Mammary epithelial cell (primary cell): ENCODE measurements at regions of chr9 and their contacts with region 1.

Region 1: DNA sequence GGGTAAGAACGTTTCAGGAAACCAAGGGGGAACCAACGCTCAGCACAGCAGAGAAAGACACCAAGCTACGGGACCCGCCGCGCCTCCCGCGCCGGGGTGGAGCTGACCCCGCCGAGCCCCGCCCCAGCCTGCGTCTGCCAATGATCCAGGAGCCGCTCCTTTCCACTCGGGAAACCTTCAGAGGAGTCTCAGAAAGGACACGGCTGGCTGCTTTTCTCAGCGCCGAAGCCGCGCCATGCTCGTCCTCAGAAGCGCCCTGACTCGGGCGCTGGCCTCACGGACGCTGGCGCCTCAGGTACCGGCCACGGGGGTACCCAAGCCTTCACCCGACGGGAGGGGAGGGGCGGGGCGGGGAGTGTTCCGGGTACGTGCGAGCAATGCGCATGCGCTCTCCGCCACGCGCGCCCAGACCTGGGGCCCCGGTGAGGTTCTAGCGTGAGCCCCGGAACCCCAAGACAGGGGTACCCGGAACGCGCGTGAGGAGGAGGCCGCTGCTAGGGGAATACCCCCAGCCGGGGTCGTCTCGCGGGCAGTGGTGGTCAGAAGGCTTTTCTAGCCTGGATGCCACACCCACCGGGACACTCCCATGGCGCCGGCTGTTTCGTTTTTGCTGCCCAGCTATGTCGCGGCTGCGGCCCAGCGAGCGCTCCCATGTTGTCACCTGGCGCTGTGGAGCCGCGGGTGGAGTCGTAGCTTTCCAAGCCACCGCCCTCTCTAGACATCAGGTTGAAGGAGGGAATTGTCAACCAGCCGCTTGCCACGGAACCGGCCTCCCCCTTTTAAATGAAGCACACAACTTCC is at the start of gene NIPSNAP3A:
- DNase-seq: peak; percentile 80
- H3K4me3 ChIP-seq: peak within 1 kb of the TSS; percentile 83 to 95 (median 95)
- H3K27ac ChIP-seq: peak within 1 kb of the TSS; percentile 89
- H3K4me1 ChIP-seq: peaks cover 14% of the 10 kb centered on the region
- H3K27me3 ChIP-seq: no peaks in the 10 kb centered on the region
- CTCF ChIP-seq: no peak
- total RNA-seq, gene NIPSNAP3A: 19.2 to 50.2 TPM

Region 2: GRCh38 chr9:103789686-103790085 is 958.1 kb before region 1 on chr9:
- CTCF ChIA-PET with region 1: no interaction called
- dilution Hi-C with region 1: no loop called
- in situ Hi-C with region 1: no loop called
- intact Hi-C with region 1: loop called (anchors 10 kb)
- DNase-seq: peak; percentile 33
- H3K4me3 ChIP-seq: no peak overlapping the region
- H3K27ac ChIP-seq: no peak overlapping the region
- H3K4me1 ChIP-seq: no peaks in the 10 kb centered on the region
- H3K27me3 ChIP-seq: no peaks in the 10 kb centered on the region
- CTCF ChIP-seq: peak; percentile 76 to 77

Region 3: DNA sequence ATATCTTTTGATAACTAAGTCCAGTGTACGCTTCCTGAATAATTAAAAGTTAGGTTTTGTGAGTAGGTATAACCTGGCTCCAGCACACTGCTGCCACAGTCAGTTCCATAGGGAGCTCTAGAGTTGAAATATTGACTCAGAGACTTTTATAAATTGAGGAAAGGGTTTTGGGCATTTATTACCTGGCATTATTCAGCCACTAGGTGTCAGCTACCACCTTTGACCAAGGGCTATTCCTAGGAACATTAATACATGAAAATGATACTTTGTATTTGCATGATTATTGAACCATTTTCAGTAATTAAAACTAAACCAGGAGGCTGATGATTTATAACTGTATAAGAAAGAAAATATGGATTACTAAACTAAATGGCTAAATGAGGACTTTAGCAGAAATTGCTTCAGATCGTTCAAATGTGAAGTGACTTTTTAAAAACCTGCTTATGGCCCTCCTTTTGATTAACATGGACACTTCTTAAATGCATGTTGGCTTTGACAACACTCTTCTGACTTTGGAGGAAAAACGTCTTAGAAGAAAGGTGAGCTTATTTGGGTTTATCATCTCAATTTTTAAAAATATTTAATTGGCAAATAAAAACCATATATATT is 570.7 kb before region 1 on chr9:
- CTCF ChIA-PET with region 1: no interaction called
- dilution Hi-C with region 1: no loop called
- in situ Hi-C with region 1: no loop called
- intact Hi-C with region 1: loop called (anchors 1 kb)
- DNase-seq: peak; percentile 32
- H3K4me3 ChIP-seq: no peak overlapping the region
- H3K27ac ChIP-seq: no peak overlapping the region
- H3K4me1 ChIP-seq: no peaks in the 10 kb centered on the region
- H3K27me3 ChIP-seq: no peaks in the 10 kb centered on the region
- CTCF ChIP-seq: peak; percentile 67 to 76

Region 4: GRCh38 chr9:104386425-104387069 is 361.2 kb before region 1 on chr9:
- CTCF ChIA-PET with region 1: no interaction called
- dilution Hi-C with region 1: no loop called
- in situ Hi-C with region 1: no loop called
- intact Hi-C with region 1: loop called (anchors 10 kb)
- DNase-seq: peak; percentile 27
- H3K4me3 ChIP-seq: no peak overlapping the region
- H3K27ac ChIP-seq: no peak overlapping the region
- H3K4me1 ChIP-seq: no peaks in the 10 kb centered on the region
- H3K27me3 ChIP-seq: no peaks in the 10 kb centered on the region
- CTCF ChIP-seq: peak; percentile 74 to 78

Region 5: GRCh38 chr9:104608336-104608735 is 139.4 kb before region 1 on chr9:
- CTCF ChIA-PET with region 1: no interaction called
- dilution Hi-C with region 1: no loop called
- in situ Hi-C with region 1: no loop called
- intact Hi-C with region 1: loop called (anchors 5 kb)
- DNase-seq: no peak
- H3K4me3 ChIP-seq: no peak overlapping the region
- H3K27ac ChIP-seq: no peak overlapping the region
- H3K4me1 ChIP-seq: no peaks in the 10 kb centered on the region
- H3K27me3 ChIP-seq: no peaks in the 10 kb centered on the region
- CTCF ChIP-seq: peak; percentile 23 to 39

Region 6: DNA sequence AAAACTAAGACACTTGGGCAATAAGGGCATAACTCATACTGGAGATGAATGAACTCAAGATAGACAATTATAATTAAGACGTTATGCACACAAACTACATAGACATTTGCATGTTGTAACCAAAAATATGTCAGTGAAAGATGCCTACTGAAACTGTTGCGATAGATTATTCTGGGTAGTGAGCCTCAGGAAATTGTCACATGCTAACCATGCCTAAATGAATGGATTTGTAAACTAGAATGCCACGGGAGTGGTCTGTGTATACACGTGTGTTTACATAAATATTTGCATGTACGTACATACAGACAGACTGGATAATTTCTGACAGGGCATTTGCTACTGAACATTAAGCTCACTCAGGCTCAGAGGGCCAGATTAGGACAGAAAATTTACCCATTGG is 17.4 kb after region 1 on chr9:
- CTCF ChIA-PET with region 1: no interaction called
- dilution Hi-C with region 1: no loop called
- in situ Hi-C with region 1: no loop called
- intact Hi-C with region 1: loop called (anchors 1 kb)
- DNase-seq: no peak
- H3K4me3 ChIP-seq: no peak overlapping the region
- H3K27ac ChIP-seq: no peak overlapping the region
- H3K4me1 ChIP-seq: peaks cover 2% of the 10 kb centered on the region
- H3K27me3 ChIP-seq: no peaks in the 10 kb centered on the region
- CTCF ChIP-seq: no peak

Region 7: DNA sequence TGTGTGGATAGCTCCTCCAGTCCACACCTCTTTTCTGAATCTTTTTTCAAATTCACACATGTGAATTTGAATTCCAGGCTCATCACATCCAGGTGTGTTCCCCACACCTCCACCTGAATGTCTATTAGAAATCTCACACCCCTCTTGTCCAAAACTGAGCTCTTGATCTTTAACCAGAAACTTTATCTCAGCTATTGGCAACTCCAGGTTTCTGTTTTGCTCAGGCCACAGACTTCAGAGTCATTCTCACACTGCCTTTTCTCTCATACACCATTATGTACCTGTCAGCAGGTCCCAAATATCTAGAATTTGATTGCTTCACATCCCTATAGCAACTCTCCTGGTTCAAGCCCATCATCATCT is 27.8 kb after region 1 on chr9:
- CTCF ChIA-PET with region 1: no interaction called
- dilution Hi-C with region 1: no loop called
- in situ Hi-C with region 1: no loop called
- intact Hi-C with region 1: no loop called
- DNase-seq: no peak
- H3K4me3 ChIP-seq: no peak overlapping the region
- H3K27ac ChIP-seq: no peak overlapping the region
- H3K4me1 ChIP-seq: peaks cover 11% of the 10 kb centered on the region
- H3K27me3 ChIP-seq: no peaks in the 10 kb centered on the region
- CTCF ChIP-seq: no peak